ENCODE measurements at regions of chr12 and their contacts with region 1.

Region 1: GRCh38 chr12:122021822-122022526 is at the start of gene BCL7A:
- DNase-seq: peak; percentile 56 to 66 (median 60)
- H3K4me3 ChIP-seq: peak within 1 kb of the TSS in 1 of 2 donors; percentile 47
- H3K4me3 Mint-ChIP-seq: peak within 1 kb of the TSS; percentile 84 to 95 (median 89)
- H3K27ac ChIP-seq: no peak within 1 kb of the TSS
- H3K27ac Mint-ChIP-seq: peak within 1 kb of the TSS; percentile 57 to 97 (median 74)
- H3K4me1 ChIP-seq: peaks cover 14% of the 10 kb centered on the region
- H3K4me1 Mint-ChIP-seq: peaks cover 4 to 12% (median 5%) of the 10 kb centered on the region in 4 donors
- H3K27me3 ChIP-seq: no peaks in the 10 kb centered on the region
- H3K27me3 Mint-ChIP-seq: peaks cover 3 to 5% of the 10 kb centered on the region in 2 donors
- total RNA-seq, gene BCL7A: 3.0 to 3.7 TPM

Region 2: GRCh38 chr12:121773011-121773777 is 248.8 kb before region 1 on chr12:
- CTCF ChIA-PET with region 1: no interaction called
- POLR2A ChIA-PET with region 1: no interaction called
- intact Hi-C with region 1: no loop called
- DNase-seq: peak; percentile 76 to 82 (median 78)
- H3K4me3 ChIP-seq: no peak overlapping the region
- H3K4me3 Mint-ChIP-seq: no peak overlapping the region
- H3K27ac ChIP-seq: no peak overlapping the region
- H3K27ac Mint-ChIP-seq: peak overlapping the region; percentile 68 to 87 (median 78)
- H3K4me1 ChIP-seq: peaks cover 23% of the 10 kb centered on the region
- H3K4me1 Mint-ChIP-seq: peaks cover 5 to 14% (median 11%) of the 10 kb centered on the region in 4 donors
- H3K27me3 ChIP-seq: no peaks in the 10 kb centered on the region
- H3K27me3 Mint-ChIP-seq: no peaks in the 10 kb centered on the region

Region 3: DNA sequence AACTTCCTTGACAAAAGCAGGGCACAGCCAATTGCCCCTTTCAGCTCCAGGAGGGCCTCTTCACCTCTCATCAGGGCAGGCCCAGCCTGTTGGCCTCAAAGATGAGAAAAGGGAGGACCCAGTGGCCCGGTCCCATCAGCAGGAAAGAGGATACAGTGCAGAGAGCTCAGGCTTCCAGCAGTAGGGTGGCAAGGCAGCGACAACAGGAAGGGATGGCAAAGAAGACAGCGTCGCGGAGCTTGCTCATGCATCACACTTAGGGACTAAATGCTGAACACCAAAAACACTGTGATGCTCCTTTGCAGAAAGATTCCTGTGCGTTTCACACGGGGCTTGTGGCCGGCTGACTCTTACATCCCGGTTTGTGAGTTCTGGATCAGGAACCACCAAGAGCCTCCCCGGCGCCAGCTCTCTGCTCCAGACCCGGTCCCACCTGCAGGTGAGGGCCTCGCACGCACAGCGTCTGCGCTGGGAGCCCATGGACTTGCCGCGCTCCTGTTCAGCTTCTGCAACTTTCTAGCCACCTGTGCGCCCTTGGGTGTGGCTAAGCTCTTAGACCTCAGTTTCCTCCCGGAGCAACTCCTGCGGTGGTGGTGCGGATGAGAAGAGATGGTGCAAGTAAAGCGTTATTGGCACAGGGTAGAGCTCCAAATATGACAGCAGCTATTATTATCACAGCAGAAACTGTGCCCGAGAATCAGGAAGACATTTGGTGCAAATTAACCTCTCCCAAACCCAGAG is 15.6 kb before region 1 on chr12:
- CTCF ChIA-PET with region 1: interaction called, 3 read pairs
- POLR2A ChIA-PET with region 1: interaction called, 12 read pairs
- intact Hi-C with region 1: no loop called
- DNase-seq: peak in 4 of 5 donors; percentile 16 to 30 (median 20)
- H3K4me3 ChIP-seq: peak overlapping the region in 1 of 2 donors; percentile 28
- H3K4me3 Mint-ChIP-seq: peak overlapping the region; percentile 69 to 85 (median 78)
- H3K27ac ChIP-seq: no peak overlapping the region
- H3K27ac Mint-ChIP-seq: peak overlapping the region; percentile 26 to 87 (median 57)
- H3K4me1 ChIP-seq: peaks cover 40% of the 10 kb centered on the region
- H3K4me1 Mint-ChIP-seq: peaks cover 13 to 39% (median 18%) of the 10 kb centered on the region in 4 donors
- H3K27me3 ChIP-seq: no peaks in the 10 kb centered on the region
- H3K27me3 Mint-ChIP-seq: peaks cover 1 to 5% of the 10 kb centered on the region in 2 donors